ENCODE measurements at regions of chr15 and their contacts with region 1.

Region 1: DNA sequence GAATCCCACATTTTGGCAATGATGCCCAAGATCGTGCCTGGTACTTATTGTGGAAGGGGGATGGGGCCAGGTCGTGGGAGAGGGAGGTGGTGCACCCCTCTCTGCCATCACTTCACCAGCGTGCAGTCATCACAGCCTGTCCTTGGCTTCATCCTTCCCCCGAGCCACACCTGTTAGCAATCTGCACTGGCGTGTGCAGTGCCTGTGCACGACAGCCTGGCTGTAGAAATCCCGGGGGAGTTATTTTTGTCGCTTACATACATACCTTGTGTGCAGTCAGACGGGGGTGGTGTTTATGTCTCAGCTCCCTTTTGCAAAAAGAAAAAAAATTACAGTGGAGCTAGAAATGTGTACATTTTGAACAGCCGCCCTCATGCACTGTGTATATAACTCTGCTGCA is 216.0 kb downstream of the TLE3 start:
- DNase-seq: peak in 9 of 10 donors; percentile 4 to 63 (median 49)
- H3K4me3 ChIP-seq: no peak overlapping the region
- H3K27ac ChIP-seq: no peak overlapping the region
- H3K27me3 ChIP-seq: peaks cover 0 to 16% (median 0%) of the 10 kb centered on the region in 45 donors
- CTCF ChIP-seq: no peak

Region 2: DNA sequence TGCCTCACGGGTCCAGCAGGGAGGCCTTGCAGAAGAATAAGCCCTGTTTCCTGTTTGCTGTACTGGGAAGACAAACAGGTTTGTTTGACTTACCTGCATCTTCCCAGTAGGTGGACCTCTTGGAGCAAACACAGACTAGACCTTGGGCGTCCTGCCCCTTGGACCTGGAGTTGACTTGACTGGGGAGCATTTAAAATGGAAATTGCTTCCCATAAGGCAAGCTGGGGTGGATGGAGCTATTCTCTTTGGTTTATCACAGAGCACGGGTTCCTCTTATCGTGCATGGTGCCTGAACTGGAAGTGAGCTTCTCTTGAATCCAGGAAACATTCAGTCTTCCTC is 277.7 kb before region 1 on chr15:
- intact Hi-C with region 1: loop called in 1 of 2 experiments (anchors 10 kb)
- DNase-seq: no peak
- H3K4me3 ChIP-seq: no peak overlapping the region
- H3K27ac ChIP-seq: no peak overlapping the region
- H3K27me3 ChIP-seq: peaks cover 0 to 15% (median 0%) of the 10 kb centered on the region in 45 donors
- CTCF ChIP-seq: no peak

Region 3: GRCh38 chr15:69713726-69714559 is 167.8 kb before region 1 on chr15:
- intact Hi-C with region 1: loop called in 1 of 2 experiments (anchors 10 kb)
- DNase-seq: no peak
- H3K4me3 ChIP-seq: no peak overlapping the region
- H3K27ac ChIP-seq: no peak overlapping the region
- H3K27me3 ChIP-seq: peaks cover 0 to 75% (median 4%) of the 10 kb centered on the region in 45 donors
- CTCF ChIP-seq: no peak

Region 4: DNA sequence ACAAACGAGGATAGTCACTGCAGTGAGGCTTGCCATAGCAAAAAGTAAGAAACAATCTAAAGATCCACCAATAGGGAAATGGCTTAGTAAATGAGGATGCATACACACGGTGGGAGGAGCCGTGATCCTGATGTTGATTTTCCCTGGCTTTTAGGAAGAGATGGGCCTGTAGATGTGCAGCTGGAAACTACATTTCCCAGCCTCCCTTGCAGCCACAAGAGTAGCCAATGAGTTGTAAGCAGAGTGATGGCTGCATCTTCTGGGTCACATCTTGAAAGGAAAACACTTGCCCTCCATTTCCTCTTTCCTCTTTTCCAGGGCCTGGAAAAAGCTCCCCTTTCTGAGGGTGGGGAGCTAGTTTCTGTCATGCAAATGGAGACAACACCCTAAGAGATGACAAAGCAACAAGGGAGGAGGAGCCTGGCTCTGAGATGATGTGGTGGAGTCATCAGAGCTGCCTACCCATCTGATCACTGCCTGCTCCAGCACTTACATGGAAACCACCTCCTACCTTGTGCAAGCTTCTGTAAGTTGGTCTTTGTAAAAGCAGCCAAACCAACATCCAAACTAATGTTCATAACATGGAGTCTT is 76.8 kb after region 1 on chr15:
- intact Hi-C with region 1: no loop called
- DNase-seq: no peak
- H3K4me3 ChIP-seq: no peak overlapping the region
- H3K27ac ChIP-seq: no peak overlapping the region
- H3K27me3 ChIP-seq: peaks cover 0 to 7% (median 0%) of the 10 kb centered on the region in 45 donors
- CTCF ChIP-seq: no peak

Region 5: DNA sequence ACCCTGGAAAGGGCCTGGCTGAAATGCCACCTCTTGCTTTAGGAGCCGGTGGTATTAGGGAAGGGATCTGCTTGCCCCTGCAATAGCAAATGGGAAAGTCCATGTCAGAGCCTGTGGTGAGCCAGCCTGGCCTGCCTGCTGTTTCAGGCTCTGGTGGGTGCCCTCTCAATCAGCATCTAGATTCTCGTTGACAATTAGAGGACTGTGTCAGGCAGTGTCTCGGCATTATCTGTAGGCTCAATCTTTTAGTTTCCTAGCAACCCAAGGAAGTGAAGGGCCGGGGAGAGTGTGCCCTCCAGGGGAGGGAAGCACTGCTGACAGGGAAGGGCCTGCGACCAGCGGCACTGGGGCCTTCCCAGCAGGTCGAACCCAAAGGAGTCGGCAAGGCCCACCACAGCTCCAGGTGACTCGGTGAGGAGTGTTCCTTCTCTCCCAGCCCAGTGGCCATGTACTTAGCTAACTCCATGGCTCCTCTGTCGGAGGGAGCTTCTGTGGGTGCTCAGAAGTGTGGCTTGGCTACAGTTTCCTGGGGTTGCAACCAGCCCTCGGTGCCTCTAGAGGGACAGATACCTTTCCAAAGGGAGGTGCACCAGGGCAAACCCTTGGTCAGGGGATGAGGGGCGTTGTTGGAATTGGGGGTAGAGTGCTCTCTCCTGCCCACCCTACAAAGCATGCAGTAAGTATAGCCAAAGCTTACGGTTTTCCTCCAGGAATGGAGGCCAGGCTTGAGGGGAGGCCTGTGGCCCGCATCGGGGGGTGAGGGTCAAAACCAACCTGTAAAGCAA is 174.0 kb after region 1 on chr15:
- intact Hi-C with region 1: no loop called
- DNase-seq: peak in 4 of 10 donors; percentile 17 to 35 (median 28)
- H3K4me3 ChIP-seq: no peak overlapping the region
- H3K27ac ChIP-seq: no peak overlapping the region
- H3K27me3 ChIP-seq: no peaks in the 10 kb centered on the region
- CTCF ChIP-seq: no peak

Region 6: DNA sequence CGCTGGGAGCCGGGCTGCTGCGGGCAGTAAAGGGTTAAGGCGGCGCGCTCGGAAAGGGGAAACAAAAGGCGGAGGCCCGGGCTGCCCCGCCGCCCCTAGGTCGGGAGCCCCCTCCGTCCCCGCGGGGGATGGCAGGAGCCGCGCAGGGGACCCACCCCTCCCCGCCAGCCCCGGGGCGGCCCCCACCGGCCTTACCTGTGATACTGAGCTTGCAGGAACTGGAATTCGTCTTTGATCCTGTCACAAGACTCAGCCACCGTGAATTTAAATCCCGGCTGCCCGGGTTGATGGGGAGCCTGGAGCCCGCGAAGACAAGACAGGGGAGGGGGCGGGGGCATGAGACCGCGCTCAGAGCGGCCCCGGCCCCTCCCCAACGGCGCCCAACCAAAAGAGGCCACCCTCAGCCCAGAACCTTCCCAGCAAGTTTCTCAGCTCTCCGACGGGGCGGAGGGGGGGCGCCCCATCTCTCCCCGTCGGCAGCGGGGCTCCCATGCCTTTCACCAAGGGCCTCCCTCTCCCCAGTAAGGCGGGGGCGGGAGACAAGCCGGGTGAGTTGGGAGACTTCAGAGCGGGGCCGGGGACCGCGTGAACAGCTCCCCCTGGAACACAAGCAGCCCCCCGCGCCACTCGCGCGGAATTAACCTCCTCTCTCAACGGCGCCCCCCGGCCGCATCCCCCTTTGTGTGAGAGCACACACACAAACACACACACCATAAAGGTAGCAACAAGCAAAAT is 214.4 kb after region 1 on chr15:
- intact Hi-C with region 1: no loop called
- DNase-seq: peak in 5 of 10 donors; percentile 28 to 59 (median 54)
- H3K4me3 ChIP-seq: peak overlapping the region; percentile 58 to 92 (median 79)
- H3K27ac ChIP-seq: peak overlapping the region in 56 of 59 donors; percentile 23 to 100 (median 94)
- H3K27me3 ChIP-seq: peaks cover 0 to 18% (median 0%) of the 10 kb centered on the region in 45 donors
- CTCF ChIP-seq: peak in 2 of 56 donors; percentile 7 to 8

Measured in dorsolateral prefrontal cortex (tissue), 120 donors.